OCI-LY7 (cell line): ENCODE measurements at regions of chr13 and their contacts with region 1.

Region 1: GRCh38 chr13:30607908-30608307 is 9.8 kb upstream of the USPL1 start:
- DNase-seq: peak; percentile 89
- H3K4me3 ChIP-seq: peak overlapping the region; percentile 20
- H3K27ac ChIP-seq: peak overlapping the region; percentile 34
- H3K4me1 ChIP-seq: peaks cover 56% of the 10 kb centered on the region
- CTCF ChIP-seq: no peak

Region 2: GRCh38 chr13:30477346-30478195 is 130.3 kb before region 1 on chr13:
- CTCF ChIA-PET with region 1: no interaction called
- POLR2A ChIA-PET with region 1: no interaction called
- intact Hi-C with region 1: no loop called
- DNase-seq: peak; percentile 62
- H3K4me3 ChIP-seq: no peak overlapping the region
- H3K27ac ChIP-seq: no peak overlapping the region
- H3K4me1 ChIP-seq: peaks cover 16% of the 10 kb centered on the region
- CTCF ChIP-seq: no peak

Region 3: GRCh38 chr13:30581582-30581981 is 26.3 kb before region 1 on chr13:
- CTCF ChIA-PET with region 1: no interaction called
- POLR2A ChIA-PET with region 1: interaction called, 13 read pairs
- intact Hi-C with region 1: no loop called
- DNase-seq: peak; percentile 59
- H3K4me3 ChIP-seq: no peak overlapping the region
- H3K27ac ChIP-seq: no peak overlapping the region
- H3K4me1 ChIP-seq: no peaks in the 10 kb centered on the region
- CTCF ChIP-seq: peak; percentile 85

Region 4: GRCh38 chr13:30623392-30623791 is 15.5 kb after region 1 on chr13:
- CTCF ChIA-PET with region 1: no interaction called
- POLR2A ChIA-PET with region 1: interaction called, 12 read pairs
- intact Hi-C with region 1: no loop called
- DNase-seq: no peak
- H3K4me3 ChIP-seq: no peak overlapping the region
- H3K27ac ChIP-seq: no peak overlapping the region
- H3K4me1 ChIP-seq: peaks cover 38% of the 10 kb centered on the region
- CTCF ChIP-seq: no peak